Naive thymus-derived CD4-positive, alpha-beta T cell (primary cell): ENCODE measurements at regions of chr3 and their contacts with region 1.

Region 1: GRCh38 chr3:16884084-16884747 is 539 bp upstream of the PLCL2 start:
- DNase-seq: peak; percentile 44 to 77 (median 66)
- ATAC-seq: peak; percentile 69
- H3K4me3 ChIP-seq: peak overlapping the region; percentile 46
- H3K4me3 Mint-ChIP-seq: peak overlapping the region; percentile 90 to 99 (median 96)
- H3K27ac ChIP-seq: peak overlapping the region; percentile 78
- H3K27ac Mint-ChIP-seq: peak overlapping the region; percentile 92 to 99 (median 97)
- H3K4me1 ChIP-seq: peaks cover 12 to 14% of the 10 kb centered on the region in 2 donors
- H3K4me1 Mint-ChIP-seq: peaks cover 27 to 40% (median 35%) of the 10 kb centered on the region in 7 donors
- H3K27me3 ChIP-seq: no peaks in the 10 kb centered on the region
- H3K27me3 Mint-ChIP-seq: peaks cover 0 to 7% (median 0%) of the 10 kb centered on the region in 5 donors

Region 2: DNA sequence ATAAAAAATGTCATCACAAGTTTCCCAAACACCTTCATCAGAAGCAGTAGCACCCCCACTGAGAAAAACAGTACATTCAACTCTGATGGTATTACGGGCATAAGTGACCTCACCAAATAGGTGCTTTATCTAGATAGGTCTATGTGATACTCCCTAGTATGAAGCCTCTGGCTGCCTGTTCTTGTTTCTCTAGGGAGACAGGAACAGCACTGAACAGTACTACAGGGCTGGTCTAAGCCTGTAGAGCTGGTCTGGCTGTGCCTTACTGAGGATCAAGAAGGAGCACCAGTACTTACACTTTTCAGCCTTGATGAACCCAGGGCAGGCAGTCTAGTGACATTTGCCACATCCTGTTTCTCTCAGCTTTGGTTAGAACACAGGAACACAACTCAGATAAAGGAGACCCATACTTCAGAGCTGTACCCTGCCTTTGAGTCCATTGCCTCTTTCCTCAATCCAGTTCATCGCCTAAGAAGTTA is 583.3 kb before region 1 on chr3:
- CTCF ChIA-PET with region 1: no interaction called
- POLR2A ChIA-PET with region 1: no interaction called
- intact Hi-C with region 1: loop called in 1 of 2 experiments (anchors 5 kb)
- DNase-seq: peak in 7 of 9 donors; percentile 68 to 86 (median 82)
- ATAC-seq: peak; percentile 86
- H3K4me3 ChIP-seq: peak overlapping the region; percentile 48
- H3K4me3 Mint-ChIP-seq: peak overlapping the region; percentile 78 to 96 (median 92)
- H3K27ac ChIP-seq: peak overlapping the region; percentile 66
- H3K27ac Mint-ChIP-seq: peak overlapping the region; percentile 86 to 98 (median 94)
- H3K4me1 ChIP-seq: peaks cover 78 to 95% of the 10 kb centered on the region in 2 donors
- H3K4me1 Mint-ChIP-seq: peaks cover 61 to 99% (median 96%) of the 10 kb centered on the region in 7 donors
- H3K27me3 ChIP-seq: no peaks in the 10 kb centered on the region
- H3K27me3 Mint-ChIP-seq: no peaks in the 10 kb centered on the region

Region 3: DNA sequence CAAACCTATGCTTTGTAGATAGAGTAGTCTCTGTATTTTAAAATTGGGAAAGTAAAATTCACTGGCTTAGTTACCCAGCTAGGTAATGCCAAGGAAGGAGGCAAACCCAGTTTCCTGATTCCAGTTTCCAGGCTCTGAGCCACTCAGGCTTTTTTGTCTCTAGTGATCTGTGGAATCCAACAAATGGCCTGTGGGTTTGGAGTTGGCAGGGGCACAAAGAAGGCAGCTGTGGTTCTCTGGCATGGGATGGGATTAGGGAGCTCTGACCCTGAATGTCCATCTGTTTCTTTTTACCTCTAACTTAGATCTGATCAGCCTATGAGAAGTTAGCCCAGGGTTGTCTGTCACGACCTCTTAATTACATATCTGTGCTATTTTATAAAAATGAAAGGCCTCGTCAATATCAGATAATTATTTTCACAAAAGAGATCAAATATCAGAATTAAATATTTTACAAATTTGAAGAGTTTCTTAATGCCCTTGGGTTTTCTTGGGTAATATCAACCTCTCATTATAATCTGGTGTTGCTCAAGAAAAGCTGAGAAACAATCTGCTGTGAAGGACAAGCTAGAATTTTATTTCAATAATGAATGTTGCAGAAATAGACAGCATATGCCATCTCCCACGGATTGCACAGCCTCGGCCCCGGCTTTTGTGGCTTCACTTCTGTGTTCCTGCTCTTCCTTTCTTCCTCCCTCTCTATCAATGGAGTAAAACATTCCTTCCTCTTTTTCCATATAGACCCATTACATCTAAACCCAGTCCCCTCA is 215.3 kb before region 1 on chr3:
- CTCF ChIA-PET with region 1: no interaction called
- POLR2A ChIA-PET with region 1: no interaction called
- intact Hi-C with region 1: no loop called
- DNase-seq: no peak
- ATAC-seq: no peak
- H3K4me3 ChIP-seq: no peak overlapping the region
- H3K4me3 Mint-ChIP-seq: no peak overlapping the region
- H3K27ac ChIP-seq: no peak overlapping the region
- H3K27ac Mint-ChIP-seq: no peak overlapping the region
- H3K4me1 ChIP-seq: no peaks in the 10 kb centered on the region
- H3K4me1 Mint-ChIP-seq: no peaks in the 10 kb centered on the region
- H3K27me3 ChIP-seq: no peaks in the 10 kb centered on the region
- H3K27me3 Mint-ChIP-seq: peaks cover 0 to 13% (median 0%) of the 10 kb centered on the region in 5 donors

Region 4: GRCh38 chr3:16828815-16829214 is 55.4 kb before region 1 on chr3:
- CTCF ChIA-PET with region 1: no interaction called
- POLR2A ChIA-PET with region 1: interaction called, 4 read pairs
- intact Hi-C with region 1: loop called in 1 of 2 experiments (anchors 1 kb)
- DNase-seq: peak in 6 of 9 donors; percentile 29 to 59 (median 42)
- ATAC-seq: peak; percentile 80
- H3K4me3 ChIP-seq: no peak overlapping the region
- H3K4me3 Mint-ChIP-seq: no peak overlapping the region
- H3K27ac ChIP-seq: no peak overlapping the region
- H3K27ac Mint-ChIP-seq: peak overlapping the region in 3 of 9 donors; percentile 23 to 53 (median 42)
- H3K4me1 ChIP-seq: peaks cover 11 to 15% of the 10 kb centered on the region in 2 donors
- H3K4me1 Mint-ChIP-seq: peaks cover 16 to 37% (median 19%) of the 10 kb centered on the region in 7 donors
- H3K27me3 ChIP-seq: no peaks in the 10 kb centered on the region
- H3K27me3 Mint-ChIP-seq: peaks cover 0 to 20% (median 0%) of the 10 kb centered on the region in 5 donors

Region 5: DNA sequence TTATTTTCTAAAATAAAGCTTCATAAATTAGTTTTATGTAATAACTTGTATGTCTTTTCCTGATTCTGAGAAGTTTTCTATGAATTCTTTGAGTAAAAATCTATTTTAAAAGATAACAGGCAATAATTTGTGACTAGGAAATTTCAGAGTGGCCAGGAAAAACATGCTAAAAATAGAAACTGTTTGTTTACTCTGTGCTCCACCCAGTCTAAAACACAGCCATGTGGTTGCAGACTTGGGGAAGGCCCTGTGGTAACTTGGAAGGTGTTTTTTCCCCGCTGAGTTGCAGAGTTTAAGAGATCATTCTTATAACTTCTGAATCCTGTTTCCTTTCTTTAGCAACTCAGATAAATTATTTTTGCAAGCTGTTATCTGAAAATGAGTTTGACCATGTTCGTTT is 22.5 kb after region 1 on chr3:
- CTCF ChIA-PET with region 1: interaction called, 5 read pairs
- POLR2A ChIA-PET with region 1: interaction called, 20 read pairs
- intact Hi-C with region 1: loop called (anchors 2 kb)
- DNase-seq: peak in 1 of 9 donors; percentile 50
- ATAC-seq: peak; percentile 77
- H3K4me3 ChIP-seq: no peak overlapping the region
- H3K4me3 Mint-ChIP-seq: peak overlapping the region; percentile 22 to 68 (median 51)
- H3K27ac ChIP-seq: no peak overlapping the region
- H3K27ac Mint-ChIP-seq: peak overlapping the region in 7 of 9 donors; percentile 26 to 76 (median 59)
- H3K4me1 ChIP-seq: peaks cover 64% of the 10 kb centered on the region in 2 donors
- H3K4me1 Mint-ChIP-seq: peaks cover 65 to 93% (median 85%) of the 10 kb centered on the region in 7 donors
- H3K27me3 ChIP-seq: no peaks in the 10 kb centered on the region
- H3K27me3 Mint-ChIP-seq: no peaks in the 10 kb centered on the region

Region 6: DNA sequence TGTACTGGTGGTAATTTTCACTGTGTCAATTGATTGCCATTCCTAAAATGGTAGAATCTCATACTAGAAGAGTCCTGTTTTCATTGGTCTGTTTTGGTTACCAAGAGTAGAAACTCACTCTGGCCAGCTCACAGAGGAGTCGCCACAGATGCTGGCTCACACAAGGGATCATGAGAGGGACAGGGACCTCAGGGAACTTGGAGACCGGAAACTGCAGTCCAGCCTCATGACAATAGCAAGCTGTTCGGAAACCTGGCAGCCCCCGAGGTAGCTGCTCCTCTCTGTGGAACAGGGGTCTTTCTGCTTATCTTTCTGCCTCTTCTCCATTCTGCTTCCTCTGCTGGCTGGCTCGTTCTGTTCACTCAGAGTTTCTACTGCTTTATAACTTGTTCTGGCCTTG is 193.4 kb after region 1 on chr3:
- CTCF ChIA-PET with region 1: no interaction called
- POLR2A ChIA-PET with region 1: no interaction called
- intact Hi-C with region 1: loop called in 1 of 2 experiments (anchors 2 kb)
- DNase-seq: no peak
- ATAC-seq: no peak
- H3K4me3 ChIP-seq: no peak overlapping the region
- H3K4me3 Mint-ChIP-seq: peak overlapping the region in 1 of 10 donors; percentile 16
- H3K27ac ChIP-seq: no peak overlapping the region
- H3K27ac Mint-ChIP-seq: peak overlapping the region in 6 of 9 donors; percentile 22 to 82 (median 43)
- H3K4me1 ChIP-seq: peaks cover 20 to 23% of the 10 kb centered on the region in 2 donors
- H3K4me1 Mint-ChIP-seq: peaks cover 35 to 76% (median 61%) of the 10 kb centered on the region in 7 donors
- H3K27me3 ChIP-seq: no peaks in the 10 kb centered on the region
- H3K27me3 Mint-ChIP-seq: no peaks in the 10 kb centered on the region

Region 7: GRCh38 chr3:17110660-17111396 is 226.6 kb after region 1 on chr3:
- CTCF ChIA-PET with region 1: no interaction called
- POLR2A ChIA-PET with region 1: no interaction called
- intact Hi-C with region 1: no loop called
- DNase-seq: no peak
- ATAC-seq: no peak
- H3K4me3 ChIP-seq: no peak overlapping the region
- H3K4me3 Mint-ChIP-seq: no peak overlapping the region
- H3K27ac ChIP-seq: no peak overlapping the region
- H3K27ac Mint-ChIP-seq: peak overlapping the region in 1 of 9 donors; percentile 49
- H3K4me1 ChIP-seq: no peaks in the 10 kb centered on the region
- H3K4me1 Mint-ChIP-seq: peaks cover 0 to 11% (median 0%) of the 10 kb centered on the region in 7 donors
- H3K27me3 ChIP-seq: no peaks in the 10 kb centered on the region
- H3K27me3 Mint-ChIP-seq: no peaks in the 10 kb centered on the region

Region 8: DNA sequence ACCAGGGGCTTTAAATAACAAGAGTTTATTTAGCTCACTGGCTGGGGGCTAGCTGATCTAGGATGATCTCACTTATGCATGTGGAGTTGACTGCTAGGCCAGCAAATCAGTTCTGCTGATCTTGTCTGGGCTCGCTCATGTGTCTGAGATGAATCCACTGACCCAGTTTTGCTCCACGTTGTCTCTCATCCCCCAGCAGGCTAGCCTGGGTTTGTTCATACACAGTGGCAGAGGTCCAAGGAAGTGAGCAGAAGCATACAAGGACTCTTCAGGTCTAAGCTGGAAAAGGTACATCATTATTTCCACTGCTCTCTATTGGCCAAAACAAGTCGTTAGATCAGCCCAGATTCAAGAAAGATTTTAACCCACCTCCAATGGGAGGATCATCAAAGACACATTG is 238.5 kb after region 1 on chr3:
- CTCF ChIA-PET with region 1: no interaction called
- POLR2A ChIA-PET with region 1: no interaction called
- intact Hi-C with region 1: no loop called
- DNase-seq: no peak
- ATAC-seq: no peak
- H3K4me3 ChIP-seq: no peak overlapping the region
- H3K4me3 Mint-ChIP-seq: no peak overlapping the region
- H3K27ac ChIP-seq: no peak overlapping the region
- H3K27ac Mint-ChIP-seq: no peak overlapping the region
- H3K4me1 ChIP-seq: no peaks in the 10 kb centered on the region
- H3K4me1 Mint-ChIP-seq: peaks cover 0 to 2% (median 0%) of the 10 kb centered on the region in 7 donors
- H3K27me3 ChIP-seq: no peaks in the 10 kb centered on the region
- H3K27me3 Mint-ChIP-seq: no peaks in the 10 kb centered on the region

Region 9: DNA sequence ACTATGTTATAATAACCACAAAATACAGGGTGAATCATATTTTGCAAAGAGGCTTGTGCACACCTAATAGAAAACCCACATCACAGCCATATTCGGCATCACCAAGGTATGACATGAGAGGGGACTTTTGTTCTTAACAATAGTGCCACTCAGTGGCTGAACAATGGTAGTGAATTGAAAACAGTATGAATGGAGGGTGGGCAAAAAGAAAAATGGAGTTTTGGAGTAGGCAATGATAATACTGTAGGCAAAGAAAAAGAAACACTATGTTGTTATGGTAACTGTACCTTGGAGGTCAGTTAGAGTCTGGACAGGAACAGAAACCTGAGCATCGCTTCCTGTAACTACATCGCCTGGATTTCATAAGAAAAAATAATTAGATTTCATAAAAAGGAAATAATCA is 349.2 kb after region 1 on chr3:
- CTCF ChIA-PET with region 1: interaction called, 5 read pairs
- POLR2A ChIA-PET with region 1: interaction called, 3 read pairs
- intact Hi-C with region 1: loop called (anchors 1 kb)
- DNase-seq: peak in 8 of 9 donors; percentile 22 to 73 (median 58)
- ATAC-seq: peak; percentile 97
- H3K4me3 ChIP-seq: no peak overlapping the region
- H3K4me3 Mint-ChIP-seq: peak overlapping the region in 7 of 10 donors; percentile 2 to 56 (median 50)
- H3K27ac ChIP-seq: no peak overlapping the region
- H3K27ac Mint-ChIP-seq: peak overlapping the region in 5 of 9 donors; percentile 4 to 73 (median 31)
- H3K4me1 ChIP-seq: peaks cover 0 to 18% of the 10 kb centered on the region in 2 donors
- H3K4me1 Mint-ChIP-seq: peaks cover 5 to 30% (median 27%) of the 10 kb centered on the region in 7 donors
- H3K27me3 ChIP-seq: no peaks in the 10 kb centered on the region
- H3K27me3 Mint-ChIP-seq: no peaks in the 10 kb centered on the region

Region 10: DNA sequence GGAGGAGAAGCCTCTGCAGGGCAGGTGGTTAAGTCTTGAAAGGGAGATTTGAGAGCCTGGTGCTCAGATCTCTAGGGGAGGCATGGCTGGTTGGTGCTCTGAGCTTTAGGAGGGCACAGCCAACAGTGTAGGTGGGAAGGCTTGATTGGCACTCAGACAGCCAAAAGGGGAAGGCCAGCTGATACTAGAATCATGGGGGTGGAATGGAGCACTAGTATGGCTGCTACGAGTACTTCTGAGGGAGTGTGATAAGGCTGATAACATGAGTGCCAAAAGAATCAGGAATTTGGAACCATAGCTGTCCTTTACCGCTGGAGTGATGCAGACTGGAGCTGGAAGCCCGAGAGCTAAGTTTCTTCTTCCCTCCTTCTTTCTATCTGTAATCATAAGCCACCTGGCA is 1042.8 kb after region 1 on chr3:
- CTCF ChIA-PET with region 1: no interaction called
- POLR2A ChIA-PET with region 1: no interaction called
- intact Hi-C with region 1: no loop called
- DNase-seq: no peak
- ATAC-seq: no peak
- H3K4me3 ChIP-seq: no peak overlapping the region
- H3K4me3 Mint-ChIP-seq: no peak overlapping the region
- H3K27ac ChIP-seq: no peak overlapping the region
- H3K27ac Mint-ChIP-seq: no peak overlapping the region
- H3K4me1 ChIP-seq: no peaks in the 10 kb centered on the region
- H3K4me1 Mint-ChIP-seq: no peaks in the 10 kb centered on the region
- H3K27me3 ChIP-seq: no peaks in the 10 kb centered on the region
- H3K27me3 Mint-ChIP-seq: peaks cover 0 to 10% (median 5%) of the 10 kb centered on the region in 5 donors